Caco-2 (cell line): ENCODE measurements at regions of chr7 and their contacts with region 1.

Region 1: DNA sequence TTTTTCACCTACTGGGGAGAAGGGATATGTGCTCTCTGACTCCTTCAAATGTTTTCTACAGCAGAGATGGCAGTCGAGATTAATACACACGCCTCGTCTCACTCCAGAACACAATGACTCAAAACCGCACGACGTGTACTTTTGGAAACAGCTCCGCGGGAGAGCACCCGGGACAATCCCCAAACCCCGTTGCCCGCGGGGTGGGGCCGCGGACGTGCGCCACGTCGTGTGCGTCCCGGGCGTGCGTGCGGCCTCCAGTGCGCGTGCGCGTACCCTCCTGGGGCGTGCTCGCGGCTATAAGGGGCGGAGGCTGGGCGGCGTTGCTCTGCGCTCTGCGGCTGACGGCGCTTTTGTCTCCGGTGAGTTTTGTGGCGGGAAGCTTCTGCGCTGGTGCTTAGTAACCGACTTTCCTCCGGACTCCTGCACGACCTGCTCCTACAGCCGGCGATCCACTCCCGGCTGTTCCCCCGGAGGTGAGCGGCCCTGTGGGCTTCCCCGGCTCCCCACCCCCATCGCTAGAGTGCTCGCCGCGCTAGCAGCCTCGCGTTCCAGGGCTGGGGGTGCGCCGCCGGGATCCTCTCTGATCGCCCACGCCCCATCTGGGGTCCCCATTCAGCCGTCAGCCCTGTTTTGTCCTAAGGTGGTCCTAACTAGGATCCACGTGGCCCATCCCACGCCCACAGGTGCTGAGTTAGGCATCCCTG is at the start of gene HILPDA:
- DNase-seq: peak; percentile 89 to 90
- H3K4me3 ChIP-seq: peak within 1 kb of the TSS; percentile 70
- H3K4me3 Mint-ChIP-seq: peak within 1 kb of the TSS; percentile 99
- H3K27ac Mint-ChIP-seq: peak within 1 kb of the TSS; percentile 92
- H3K4me1 ChIP-seq: peaks cover 33% of the 10 kb centered on the region
- H3K4me1 Mint-ChIP-seq: peaks cover 32% of the 10 kb centered on the region
- H3K27me3 ChIP-seq: no peaks in the 10 kb centered on the region
- H3K27me3 Mint-ChIP-seq: peaks cover 5% of the 10 kb centered on the region
- CTCF ChIP-seq: no peak
- total RNA-seq, gene HILPDA: 17.0 and 17.8 TPM in 2 replicates

Region 2: GRCh38 chr7:128398016-128398840 is 57.5 kb before region 1 on chr7:
- CTCF ChIA-PET with region 1: interaction called, 3 read pairs
- POLR2A ChIA-PET with region 1: interaction called, 4 read pairs
- intact Hi-C with region 1: loop called (anchors 1 kb)
- DNase-seq: peak; percentile 66 to 78
- H3K4me3 ChIP-seq: no peak overlapping the region
- H3K4me3 Mint-ChIP-seq: no peak overlapping the region
- H3K27ac Mint-ChIP-seq: no peak overlapping the region
- H3K4me1 ChIP-seq: no peaks in the 10 kb centered on the region
- H3K4me1 Mint-ChIP-seq: no peaks in the 10 kb centered on the region
- H3K27me3 ChIP-seq: no peaks in the 10 kb centered on the region
- H3K27me3 Mint-ChIP-seq: no peaks in the 10 kb centered on the region
- CTCF ChIP-seq: peak; percentile 95 to 98

Region 3: DNA sequence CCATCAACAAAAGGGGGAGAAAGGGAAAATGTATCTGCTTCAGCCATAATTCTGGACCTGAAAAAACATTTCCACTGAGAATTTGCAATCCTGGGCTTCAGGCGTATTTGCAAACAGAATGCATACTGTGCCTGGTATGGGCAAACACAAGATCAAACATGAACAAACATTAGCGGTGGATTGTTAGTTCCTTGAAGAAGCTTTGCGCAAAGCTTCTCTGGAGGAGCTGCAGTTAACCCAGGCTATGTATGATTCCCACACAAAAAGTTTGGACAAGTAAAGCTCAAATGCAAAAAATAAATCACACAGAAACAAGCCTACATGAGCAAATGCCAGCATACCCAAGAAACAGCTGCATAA is 20.4 kb before region 1 on chr7:
- CTCF ChIA-PET with region 1: interaction called, 226 read pairs
- POLR2A ChIA-PET with region 1: interaction called, 13 read pairs
- intact Hi-C with region 1: loop called (anchors 1 kb)
- DNase-seq: peak; percentile 71 to 76
- H3K4me3 ChIP-seq: no peak overlapping the region
- H3K4me3 Mint-ChIP-seq: peak overlapping the region; percentile 58
- H3K27ac Mint-ChIP-seq: peak overlapping the region; percentile 81
- H3K4me1 ChIP-seq: peaks cover 29% of the 10 kb centered on the region
- H3K4me1 Mint-ChIP-seq: peaks cover 23% of the 10 kb centered on the region
- H3K27me3 ChIP-seq: no peaks in the 10 kb centered on the region
- H3K27me3 Mint-ChIP-seq: no peaks in the 10 kb centered on the region
- CTCF ChIP-seq: no peak

Region 4: DNA sequence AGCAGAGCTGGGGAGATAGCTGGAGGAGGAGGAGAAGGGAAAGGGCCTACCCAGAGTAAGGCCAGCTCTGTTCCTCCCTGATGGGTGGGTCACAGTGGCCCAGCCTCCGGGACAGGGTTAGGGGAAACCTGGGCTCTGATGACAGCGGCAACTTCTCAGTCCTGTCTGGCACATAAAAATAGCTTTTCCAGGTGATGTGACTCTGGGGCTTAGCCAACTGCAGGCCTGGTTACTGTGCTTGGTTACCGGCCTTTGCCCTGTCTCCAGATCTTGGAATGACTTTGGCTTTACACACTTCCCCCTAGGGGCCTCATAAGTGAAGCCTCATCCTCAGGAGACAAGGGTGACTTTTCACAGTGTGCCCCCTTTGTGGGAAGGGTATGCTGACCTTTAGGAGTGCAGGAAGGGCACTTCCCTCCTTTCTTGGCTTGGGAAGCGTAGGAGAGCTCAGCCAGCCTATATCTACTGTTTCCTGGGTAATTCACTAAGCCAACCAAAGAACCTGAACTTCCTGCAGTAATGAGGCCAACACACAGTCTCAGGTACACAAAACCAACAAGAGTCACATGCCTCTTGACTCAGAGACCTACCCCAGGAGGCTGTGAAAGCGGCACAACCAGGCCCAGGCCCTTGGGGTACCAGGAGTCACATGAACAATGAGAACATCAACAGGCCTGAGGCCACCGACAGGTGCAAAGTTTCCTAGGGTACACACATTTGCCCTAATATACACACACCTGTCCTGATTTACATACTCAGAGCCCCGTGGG is 11.7 kb before region 1 on chr7:
- CTCF ChIA-PET with region 1: interaction called, 6 read pairs
- POLR2A ChIA-PET with region 1: interaction called, 5 read pairs
- intact Hi-C with region 1: loop called (anchors 1 kb)
- DNase-seq: peak; percentile 53 to 62
- H3K4me3 ChIP-seq: no peak overlapping the region
- H3K4me3 Mint-ChIP-seq: no peak overlapping the region
- H3K27ac Mint-ChIP-seq: peak overlapping the region; percentile 69
- H3K4me1 ChIP-seq: peaks cover 26% of the 10 kb centered on the region
- H3K4me1 Mint-ChIP-seq: peaks cover 17% of the 10 kb centered on the region
- H3K27me3 ChIP-seq: no peaks in the 10 kb centered on the region
- H3K27me3 Mint-ChIP-seq: no peaks in the 10 kb centered on the region
- CTCF ChIP-seq: no peak

Region 5: DNA sequence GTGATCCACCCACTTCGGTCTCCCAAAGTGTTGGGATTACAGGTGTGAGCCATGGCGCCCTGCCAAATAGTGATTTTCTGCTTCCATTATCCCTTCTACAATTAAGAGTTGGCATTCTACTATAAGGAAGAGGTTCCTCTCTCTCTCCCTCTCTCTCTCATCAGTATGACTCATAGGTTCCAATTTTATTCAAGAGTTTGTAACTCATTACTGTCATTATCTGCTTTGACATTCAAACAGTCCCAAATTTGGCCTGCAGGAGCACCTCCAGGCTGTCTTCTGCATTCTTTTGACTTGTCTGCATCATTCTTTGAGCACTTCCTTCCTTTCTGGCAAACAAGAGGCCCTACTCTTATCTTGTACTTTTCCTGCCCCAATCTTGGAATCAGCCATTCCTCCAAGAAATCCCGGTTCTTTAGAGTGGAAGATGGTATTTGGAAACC is 250.2 kb after region 1 on chr7:
- CTCF ChIA-PET with region 1: no interaction called
- POLR2A ChIA-PET with region 1: no interaction called
- intact Hi-C with region 1: no loop called
- DNase-seq: no peak
- H3K4me3 ChIP-seq: no peak overlapping the region
- H3K4me3 Mint-ChIP-seq: no peak overlapping the region
- H3K27ac Mint-ChIP-seq: no peak overlapping the region
- H3K4me1 ChIP-seq: no peaks in the 10 kb centered on the region
- H3K4me1 Mint-ChIP-seq: peaks cover 7% of the 10 kb centered on the region
- H3K27me3 ChIP-seq: no peaks in the 10 kb centered on the region
- H3K27me3 Mint-ChIP-seq: peaks cover 10% of the 10 kb centered on the region
- CTCF ChIP-seq: no peak

Region 6: DNA sequence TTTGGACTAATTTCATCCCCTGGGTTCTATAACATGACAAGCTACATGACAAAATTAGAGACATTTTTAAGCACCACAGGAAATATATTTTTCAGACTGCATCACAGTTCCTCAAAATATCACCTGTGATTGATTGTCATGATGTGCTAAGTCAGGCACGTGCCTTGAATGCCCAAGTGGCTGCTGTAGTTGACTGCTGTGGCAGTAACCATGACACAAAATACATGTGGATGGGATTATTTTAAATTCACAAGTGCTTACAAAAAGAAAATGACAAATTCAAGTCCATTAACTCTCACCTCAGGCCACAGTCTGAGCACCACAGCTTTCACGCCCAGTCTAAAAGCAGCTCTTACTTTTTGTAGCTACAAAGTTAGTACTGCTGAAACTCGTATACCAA is 553.7 kb after region 1 on chr7:
- CTCF ChIA-PET with region 1: no interaction called
- POLR2A ChIA-PET with region 1: no interaction called
- intact Hi-C with region 1: no loop called
- DNase-seq: no peak
- H3K4me3 ChIP-seq: no peak overlapping the region
- H3K4me3 Mint-ChIP-seq: no peak overlapping the region
- H3K27ac Mint-ChIP-seq: no peak overlapping the region
- H3K4me1 ChIP-seq: no peaks in the 10 kb centered on the region
- H3K4me1 Mint-ChIP-seq: peaks cover 7% of the 10 kb centered on the region
- H3K27me3 ChIP-seq: no peaks in the 10 kb centered on the region
- H3K27me3 Mint-ChIP-seq: no peaks in the 10 kb centered on the region
- CTCF ChIP-seq: no peak

Region 7: GRCh38 chr7:129925416-129926002 is 1469.8 kb after region 1 on chr7:
- CTCF ChIA-PET with region 1: no interaction called
- POLR2A ChIA-PET with region 1: interaction called, 10 read pairs
- intact Hi-C with region 1: no loop called
- DNase-seq: no peak
- H3K4me3 ChIP-seq: no peak overlapping the region
- H3K4me3 Mint-ChIP-seq: no peak overlapping the region
- H3K27ac Mint-ChIP-seq: no peak overlapping the region
- H3K4me1 ChIP-seq: no peaks in the 10 kb centered on the region
- H3K4me1 Mint-ChIP-seq: peaks cover 7% of the 10 kb centered on the region
- H3K27me3 ChIP-seq: no peaks in the 10 kb centered on the region
- H3K27me3 Mint-ChIP-seq: no peaks in the 10 kb centered on the region
- CTCF ChIP-seq: no peak